Aorta (tissue), 5 donors: ENCODE measurements at regions of chr10 and their contacts with region 1.

Region 1: GRCh38 chr10:100433253-100434240 is 29.3 kb upstream of the WNT8B start:
- DNase-seq: peak; percentile 92 to 94
- ATAC-seq: peak; percentile 94
- H3K4me3 ChIP-seq: no peak overlapping the region
- H3K27ac ChIP-seq: no peak overlapping the region
- H3K4me1 ChIP-seq: no peaks in the 10 kb centered on the region
- H3K27me3 ChIP-seq: no peaks in the 10 kb centered on the region

Region 2: GRCh38 chr10:100338434-100339036 is 95.0 kb before region 1 on chr10:
- intact Hi-C with region 1: loop called (anchors 1 to 2 kb)
- DNase-seq: peak; percentile 82 to 90
- ATAC-seq: peak; percentile 89
- H3K4me3 ChIP-seq: no peak overlapping the region
- H3K27ac ChIP-seq: no peak overlapping the region
- H3K4me1 ChIP-seq: no peaks in the 10 kb centered on the region
- H3K27me3 ChIP-seq: no peaks in the 10 kb centered on the region

Region 3: DNA sequence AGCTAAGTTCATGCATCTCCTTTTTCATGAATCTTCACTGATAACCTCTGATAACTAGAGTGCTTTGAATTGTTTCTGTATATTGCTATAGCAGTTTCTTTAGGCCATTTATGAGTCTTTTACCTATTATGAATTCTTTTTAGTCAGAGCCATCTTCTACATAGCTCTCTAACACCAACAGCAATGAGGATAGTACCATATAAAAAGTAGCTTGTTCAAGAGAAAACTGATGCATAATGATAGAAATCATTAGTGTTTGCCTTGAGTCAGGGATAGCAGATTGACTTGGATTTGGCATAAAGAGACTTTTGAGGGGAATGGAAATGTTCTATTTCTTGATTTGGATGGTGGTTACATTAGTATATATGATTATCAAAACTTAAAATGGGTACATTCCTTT is 510.0 kb after region 1 on chr10:
- intact Hi-C with region 1: no loop called
- DNase-seq: no peak
- ATAC-seq: no peak
- H3K4me3 ChIP-seq: no peak overlapping the region
- H3K27ac ChIP-seq: no peak overlapping the region
- H3K4me1 ChIP-seq: no peaks in the 10 kb centered on the region
- H3K27me3 ChIP-seq: no peaks in the 10 kb centered on the region